Mammary epithelial cell (primary cell): ENCODE measurements at regions of chr12 and their contacts with region 1.

Region 1: DNA sequence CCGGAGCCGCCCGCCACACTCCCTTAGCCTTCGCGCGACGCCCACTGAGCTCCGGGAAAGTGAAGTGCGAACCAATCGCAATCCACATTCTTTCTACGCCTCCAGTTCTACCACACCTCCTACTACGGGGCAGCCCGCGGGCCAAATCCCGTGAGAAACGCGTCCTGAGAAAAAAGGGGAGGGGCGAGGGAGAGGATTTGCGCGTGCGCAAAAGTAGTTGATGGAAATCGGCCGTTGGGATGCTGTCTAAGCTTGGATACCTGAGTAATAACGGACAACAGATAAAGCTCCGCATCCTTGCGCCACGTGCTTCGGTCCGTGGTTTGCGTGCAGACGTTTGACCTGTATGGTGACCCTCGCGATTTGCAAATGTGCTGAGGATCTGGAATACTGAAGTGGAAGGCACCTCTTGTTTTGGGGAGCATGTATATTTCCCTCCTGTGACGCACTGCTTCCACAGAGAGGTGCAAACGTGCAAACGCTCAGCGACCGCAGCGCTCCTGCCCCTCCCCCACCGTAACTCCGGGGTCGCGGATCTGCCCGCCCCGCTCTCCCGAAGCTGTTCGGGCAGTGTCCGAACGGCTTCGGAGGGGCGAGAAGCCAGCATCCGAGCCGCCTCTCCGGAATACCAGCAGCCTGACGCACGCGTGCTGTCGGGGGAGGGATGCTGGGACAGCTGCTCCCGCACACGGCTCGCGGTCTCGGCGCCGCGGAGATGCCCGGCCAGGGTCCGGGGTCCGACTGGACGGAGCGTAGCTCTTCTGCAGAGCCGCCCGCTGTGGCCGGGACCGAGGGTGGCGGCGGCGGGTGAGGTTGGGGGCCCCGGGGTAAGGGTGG is at the starts of genes FAM216A and GPN3:
- DNase-seq: peak; percentile 99
- H3K4me3 ChIP-seq: peak within 1 kb of the TSS; percentile 71 to 85 (median 83)
- H3K27ac ChIP-seq: peak within 1 kb of the TSS; percentile 86
- H3K4me1 ChIP-seq: peaks cover 13% of the 10 kb centered on the region
- H3K27me3 ChIP-seq: no peaks in the 10 kb centered on the region
- CTCF ChIP-seq: no peak
- total RNA-seq, gene FAM216A: 5.2 to 13.5 TPM
- total RNA-seq, gene GPN3: 12.3 to 19.5 TPM

Region 2: GRCh38 chr12:110501752-110502738 is 33.6 kb after region 1 on chr12 and contains the starts of genes RAD9B and VPS29:
- CTCF ChIA-PET with region 1: no interaction called
- dilution Hi-C with region 1: loop called (anchors 5 kb)
- in situ Hi-C with region 1: no loop called
- intact Hi-C with region 1: loop called (anchors 1 kb)
- DNase-seq: peak; percentile 99
- H3K4me3 ChIP-seq: peak within 1 kb of the TSS; percentile 84 to 94 (median 92)
- H3K27ac ChIP-seq: peak within 1 kb of the TSS; percentile 96
- H3K4me1 ChIP-seq: peaks cover 17% of the 10 kb centered on the region
- H3K27me3 ChIP-seq: no peaks in the 10 kb centered on the region
- CTCF ChIP-seq: no peak
- total RNA-seq, gene RAD9B: 1.1 to 2.5 TPM
- total RNA-seq, gene VPS29: 56.3 to 130 TPM

Region 3: GRCh38 chr12:110531741-110532333 is 63.4 kb after region 1 on chr12:
- CTCF ChIA-PET with region 1: no interaction called
- dilution Hi-C with region 1: loop called (anchors 5 kb)
- in situ Hi-C with region 1: no loop called
- intact Hi-C with region 1: no loop called
- DNase-seq: peak; percentile 88
- H3K4me3 ChIP-seq: no peak overlapping the region
- H3K27ac ChIP-seq: peak overlapping the region; percentile 52
- H3K4me1 ChIP-seq: peaks cover 27% of the 10 kb centered on the region
- H3K27me3 ChIP-seq: no peaks in the 10 kb centered on the region
- CTCF ChIP-seq: no peak

Region 4: GRCh38 chr12:110543252-110543959 is 75.0 kb after region 1 on chr12:
- CTCF ChIA-PET with region 1: no interaction called
- dilution Hi-C with region 1: no loop called
- in situ Hi-C with region 1: no loop called
- intact Hi-C with region 1: loop called (anchors 2 kb)
- DNase-seq: peak; percentile 98
- H3K4me3 ChIP-seq: no peak overlapping the region
- H3K27ac ChIP-seq: peak overlapping the region; percentile 68
- H3K4me1 ChIP-seq: peaks cover 52% of the 10 kb centered on the region
- H3K27me3 ChIP-seq: no peaks in the 10 kb centered on the region
- CTCF ChIP-seq: no peak